Breast epithelium (tissue), 4 donors: ENCODE measurements at regions of chrX and their contacts with region 1.

Region 1: GRCh38 chrX:39802354-39802753 is 295.4 kb downstream of the BCOR start:
- DNase-seq: no peak
- H3K4me3 ChIP-seq: no peak overlapping the region
- H3K27ac ChIP-seq: no peak overlapping the region
- H3K4me1 ChIP-seq: no peaks in the 10 kb centered on the region
- H3K27me3 ChIP-seq: peaks cover 0 to 50% of the 10 kb centered on the region in 2 donors
- CTCF ChIP-seq: no peak
- POLR2A ChIP-seq: no peak

Region 2: GRCh38 chrX:38959736-38960135 is 842.6 kb before region 1 on chrX:
- intact Hi-C with region 1: loop called (anchors 5 kb)
- DNase-seq: no peak
- H3K4me3 ChIP-seq: no peak overlapping the region
- H3K27ac ChIP-seq: peak overlapping the region in 1 of 2 donors; percentile 34
- H3K4me1 ChIP-seq: no peaks in the 10 kb centered on the region
- H3K27me3 ChIP-seq: peaks cover 0 to 26% of the 10 kb centered on the region in 2 donors
- CTCF ChIP-seq: no peak
- POLR2A ChIP-seq: no peak